Right ventricle myocardium inferior (tissue), 1 donor: ENCODE measurements at regions of chr18 and their contacts with region 1.

Region 1: GRCh38 chr18:56575819-56576663 is 62.4 kb downstream of the TXNL1 start:
- DNase-seq: no peak
- ATAC-seq: peak; percentile 82

Region 2: DNA sequence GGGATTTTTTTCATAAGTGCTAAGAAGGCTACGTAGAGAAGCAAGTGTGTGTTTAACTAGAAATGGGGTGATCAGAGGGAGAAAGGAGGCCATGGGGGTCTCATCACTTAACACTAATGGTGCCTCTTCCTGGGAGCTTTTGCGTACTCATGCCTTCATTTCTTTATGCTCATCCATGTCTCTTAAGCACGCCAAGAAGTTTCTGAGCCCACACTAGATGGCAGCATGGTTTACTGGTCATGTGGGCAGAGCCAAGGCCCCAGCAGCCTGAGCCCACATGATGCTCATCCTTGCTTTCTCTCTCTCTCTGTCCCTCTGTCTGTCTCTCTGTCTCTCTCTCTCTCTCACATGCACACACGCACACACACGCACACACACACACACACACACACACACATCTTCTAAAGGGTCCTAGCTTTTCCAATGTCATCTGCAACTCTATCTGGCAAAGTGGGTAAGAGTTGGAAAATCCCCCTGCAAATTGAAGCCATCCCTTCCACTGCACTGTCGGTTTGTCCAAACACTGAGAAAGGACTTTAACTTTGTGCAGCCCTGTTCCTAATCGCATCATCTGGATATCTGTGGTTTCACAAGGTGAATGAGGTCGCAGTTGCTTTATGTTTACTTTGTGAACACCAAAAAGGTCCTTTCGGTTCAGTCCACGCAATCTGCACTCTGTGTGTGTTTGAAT is 1479.6 kb before region 1 on chr18:
- intact Hi-C with region 1: loop called (anchors 5 kb)
- DNase-seq: no peak
- ATAC-seq: peak; percentile 77

Region 3: DNA sequence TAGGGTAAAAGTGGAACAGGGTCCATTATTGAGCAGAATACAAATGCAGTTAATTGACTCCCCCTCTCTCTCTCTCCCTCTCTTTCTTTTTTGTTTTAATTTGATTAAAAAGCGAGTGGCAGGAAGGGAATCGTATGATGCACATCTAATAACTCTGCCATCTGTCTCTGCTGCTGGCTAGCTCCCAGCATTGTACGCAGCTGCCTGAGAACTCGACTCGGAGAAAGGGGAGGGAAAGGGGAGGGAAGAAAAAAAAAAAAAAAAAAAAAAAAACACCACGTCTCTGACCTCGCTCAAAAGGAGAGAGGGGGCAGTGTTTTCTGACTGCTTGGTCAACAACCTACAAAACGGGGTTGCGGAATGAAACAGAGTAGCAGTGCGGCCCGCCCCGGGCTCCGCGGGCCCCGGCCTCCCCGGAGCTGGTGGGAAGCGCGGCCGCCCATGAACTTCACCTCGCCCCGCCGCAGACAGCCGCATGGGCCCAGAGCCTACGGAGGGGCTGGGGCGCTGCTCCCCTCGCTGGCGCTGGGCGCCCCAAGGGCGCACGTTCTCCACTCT is 1253.8 kb before region 1 on chr18:
- intact Hi-C with region 1: loop called (anchors 10 kb)
- DNase-seq: peak; percentile 88
- ATAC-seq: peak; percentile 88

Region 4: DNA sequence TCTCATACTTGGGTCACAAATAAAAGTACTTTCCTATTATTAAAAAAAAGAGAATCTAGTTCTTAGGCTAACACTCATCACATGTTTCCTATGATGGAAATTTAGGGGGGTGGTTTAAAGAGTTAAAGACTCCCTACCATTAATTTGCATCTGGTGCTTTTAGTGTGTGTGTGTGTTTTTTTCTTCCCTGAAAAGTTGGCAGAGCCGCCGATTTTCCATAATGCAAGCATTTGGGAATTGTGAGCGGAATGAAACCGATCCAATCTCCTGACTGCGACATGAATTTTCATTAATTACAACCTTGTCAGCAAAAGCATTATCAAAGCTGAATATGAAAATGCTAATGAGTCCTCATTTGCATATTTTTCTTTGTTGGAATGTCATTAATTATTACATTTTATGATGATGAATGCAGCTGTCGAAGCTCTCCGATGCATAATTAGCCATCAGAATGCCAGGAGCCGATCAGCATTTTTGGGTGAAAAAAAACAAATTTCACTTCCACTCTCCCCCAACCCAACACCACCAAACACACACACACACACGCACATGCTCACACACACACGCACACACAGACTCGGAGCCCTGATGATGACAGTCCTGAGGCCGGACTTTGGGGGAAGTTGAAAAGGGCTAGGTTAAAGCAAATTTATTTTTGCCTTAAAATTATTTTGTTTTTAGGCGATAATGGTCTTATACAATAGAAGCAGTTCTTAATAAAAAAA is 1153.4 kb before region 1 on chr18:
- intact Hi-C with region 1: loop called (anchors 5 kb)
- DNase-seq: no peak
- ATAC-seq: peak; percentile 63

Region 5: GRCh38 chr18:55805666-55806065 is 770.4 kb before region 1 on chr18:
- intact Hi-C with region 1: no loop called
- DNase-seq: no peak
- ATAC-seq: no peak

Region 6: DNA sequence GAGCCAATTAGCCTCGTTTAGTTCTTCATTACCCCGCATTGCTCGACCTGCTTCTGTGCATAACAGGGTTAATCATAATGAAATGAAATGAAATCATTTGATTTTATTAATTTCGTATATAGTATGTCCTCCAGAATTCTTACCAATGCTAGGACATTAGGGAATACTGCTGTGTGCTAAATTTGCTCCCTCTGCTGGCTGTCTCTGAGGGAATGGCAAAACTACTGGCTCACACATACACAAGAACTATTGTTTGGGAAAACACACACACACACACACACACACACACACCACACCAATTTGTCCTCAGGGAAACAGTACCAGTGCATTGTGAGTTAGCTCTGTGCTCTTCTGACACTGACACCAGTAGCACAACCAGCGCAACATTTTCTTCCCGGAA is 714.8 kb before region 1 on chr18:
- intact Hi-C with region 1: loop called (anchors 5 kb)
- DNase-seq: no peak
- ATAC-seq: no peak

Region 7: DNA sequence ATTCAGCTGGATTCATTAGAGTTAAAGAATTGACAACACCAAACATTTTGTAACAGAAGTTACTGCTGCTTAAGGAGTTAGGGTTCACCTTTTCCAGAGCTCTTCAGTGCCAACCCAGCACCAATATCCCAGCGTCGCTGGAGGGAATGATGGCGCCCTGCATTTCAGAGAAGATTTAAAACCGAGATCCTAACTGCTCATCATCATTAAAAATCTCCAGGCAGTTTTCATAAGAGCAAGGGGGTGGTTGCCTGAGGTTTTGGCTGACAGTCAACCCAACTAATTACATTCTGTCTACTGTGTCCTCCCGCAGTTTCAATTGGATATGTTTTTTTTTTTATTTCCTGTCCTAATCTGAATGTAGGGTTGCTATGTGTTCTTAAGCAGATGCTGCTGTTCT is 478.4 kb before region 1 on chr18:
- intact Hi-C with region 1: no loop called
- DNase-seq: no peak
- ATAC-seq: no peak

Region 8: GRCh38 chr18:56615738-56616520 is 39.9 kb after region 1 on chr18:
- intact Hi-C with region 1: no loop called
- DNase-seq: no peak
- ATAC-seq: no peak

Region 9: DNA sequence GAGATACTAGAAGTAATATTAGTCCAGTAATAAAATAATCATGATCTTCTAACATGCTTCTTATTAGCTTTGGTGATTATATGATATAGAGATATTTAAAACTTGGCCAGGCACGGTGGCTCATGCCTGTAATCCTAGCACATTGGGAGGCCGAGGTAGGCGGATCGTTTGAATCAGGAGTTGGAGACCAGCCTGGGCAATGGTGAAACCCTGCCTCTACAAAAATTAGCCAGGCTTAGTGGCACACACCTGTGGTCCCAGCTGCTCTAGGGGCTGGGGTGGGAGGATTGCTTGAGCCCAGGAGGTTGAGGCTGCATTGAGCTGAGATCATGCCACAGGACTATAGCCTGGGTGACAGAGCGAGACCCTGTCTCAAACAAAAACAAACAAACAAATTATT is 162.1 kb after region 1 on chr18:
- intact Hi-C with region 1: no loop called
- DNase-seq: no peak
- ATAC-seq: no peak